Left cardiac atrium (tissue), 4 donors: ENCODE measurements at regions of chr11 and their contacts with region 1.

Region 1: GRCh38 chr11:64284962-64285884 is at the start of gene GPR137:
- DNase-seq: peak; percentile 89
- ATAC-seq: peak; percentile 80 to 83
- total RNA-seq, gene GPR137: 31.6 to 32.6 TPM

Region 2: GRCh38 chr11:64269380-64270234 is 15.6 kb before region 1 on chr11:
- intact Hi-C with region 1: loop called in 1 of 2 experiments (anchors 1 kb)
- DNase-seq: peak; percentile 98
- ATAC-seq: peak; percentile 85 to 89